Activated CD4-positive, alpha-beta memory T cell treated with anti-CD3 and anti-CD28 coated beads for 36 hours (primary cell): ENCODE measurements at regions of chr4 and their contacts with region 1.

Region 1: DNA sequence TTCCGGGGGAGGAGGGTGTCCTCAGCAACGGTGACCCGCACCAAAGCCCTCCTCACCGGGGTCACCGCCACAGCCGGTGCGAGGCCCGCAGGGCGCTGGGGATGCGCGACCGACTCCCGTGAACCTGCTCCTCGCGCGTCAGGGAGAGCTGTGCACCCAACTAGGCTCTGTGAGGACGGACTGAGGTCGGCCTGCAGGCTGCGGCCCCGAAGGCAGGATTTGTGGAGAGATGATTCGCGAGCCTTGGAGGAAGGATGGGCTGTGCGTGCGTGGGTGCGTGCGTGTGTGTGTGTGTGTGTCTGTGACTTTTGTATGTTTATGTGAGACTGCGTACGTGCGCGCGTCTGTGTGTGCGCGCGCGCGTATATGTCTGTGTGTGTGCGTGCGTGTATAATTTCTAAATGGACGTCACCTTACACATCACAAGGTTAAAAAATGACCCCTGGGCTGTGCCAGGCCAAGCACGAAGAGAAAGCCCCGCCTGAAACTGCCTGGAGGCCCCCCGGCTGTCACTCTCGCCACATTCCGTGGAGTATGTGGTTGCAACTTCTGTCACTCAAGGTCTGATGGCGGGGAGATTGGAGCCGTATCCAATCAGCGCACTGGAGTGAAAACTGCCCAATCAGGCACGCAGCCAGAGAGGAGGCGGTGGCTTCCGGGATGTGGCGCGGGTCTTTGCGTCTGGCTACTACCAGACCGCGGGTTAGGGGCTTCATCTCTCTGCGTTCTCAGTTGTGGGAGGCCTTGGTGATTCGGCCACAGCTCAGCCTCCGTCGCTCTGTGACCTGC is at the start of gene ZNF141:
- DNase-seq: peak; percentile 96
- H3K4me3 Mint-ChIP-seq: peak within 1 kb of the TSS; percentile 100
- H3K27ac Mint-ChIP-seq: peak within 1 kb of the TSS; percentile 100
- H3K4me1 Mint-ChIP-seq: peaks cover 11% of the 10 kb centered on the region
- H3K27me3 Mint-ChIP-seq: no peaks in the 10 kb centered on the region
- total RNA-seq, gene ZNF141: 22.4 to 24.2 TPM

Region 2: GRCh38 chr4:116499-116898 is 220.8 kb before region 1 on chr4:
- CTCF ChIA-PET with region 1: no interaction called
- POLR2A ChIA-PET with region 1: no interaction called
- intact Hi-C with region 1: no loop called
- DNase-seq: no peak
- H3K4me3 Mint-ChIP-seq: no peak overlapping the region
- H3K27ac Mint-ChIP-seq: no peak overlapping the region
- H3K4me1 Mint-ChIP-seq: peaks cover 9% of the 10 kb centered on the region
- H3K27me3 Mint-ChIP-seq: peaks cover 4% of the 10 kb centered on the region

Region 3: DNA sequence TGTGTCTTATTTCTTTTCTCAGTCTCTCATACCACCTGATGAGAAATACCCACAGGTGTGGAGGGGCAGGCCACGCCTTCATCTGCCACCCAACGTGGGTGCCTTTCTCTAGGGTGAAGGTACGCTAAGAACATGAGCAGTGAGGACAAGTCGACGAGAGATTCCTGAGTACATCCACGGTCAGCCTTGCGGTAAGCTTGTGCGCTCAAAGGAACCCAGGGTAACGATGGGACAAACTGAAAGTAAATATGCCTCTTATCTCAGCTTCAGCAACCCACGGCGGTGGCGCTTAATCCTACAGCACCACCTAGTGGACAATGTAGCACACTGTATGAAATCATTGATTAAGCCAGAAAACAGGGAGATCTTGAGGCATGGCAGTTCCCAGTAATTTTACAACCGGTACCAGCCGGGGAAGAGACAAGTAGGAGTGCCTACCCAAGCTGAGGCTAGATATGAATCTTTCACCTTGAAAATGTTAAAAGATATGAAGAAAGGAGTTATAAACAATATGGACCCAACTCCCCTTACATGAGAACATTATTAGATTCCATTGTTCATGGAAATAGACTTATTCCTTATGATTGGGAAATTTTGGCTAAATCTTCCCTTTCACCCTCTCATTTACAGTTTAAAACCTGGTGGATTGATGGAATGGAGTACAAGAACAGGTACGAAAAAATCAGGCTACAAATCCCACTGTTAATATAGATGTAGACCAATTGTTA is 95.1 kb before region 1 on chr4:
- CTCF ChIA-PET with region 1: interaction called, 3 read pairs
- POLR2A ChIA-PET with region 1: no interaction called
- intact Hi-C with region 1: loop called (anchors 10 kb)
- DNase-seq: peak; percentile 81
- H3K4me3 Mint-ChIP-seq: peak overlapping the region; percentile 84
- H3K27ac Mint-ChIP-seq: peak overlapping the region; percentile 82
- H3K4me1 Mint-ChIP-seq: peaks cover 7% of the 10 kb centered on the region
- H3K27me3 Mint-ChIP-seq: no peaks in the 10 kb centered on the region

Region 4: DNA sequence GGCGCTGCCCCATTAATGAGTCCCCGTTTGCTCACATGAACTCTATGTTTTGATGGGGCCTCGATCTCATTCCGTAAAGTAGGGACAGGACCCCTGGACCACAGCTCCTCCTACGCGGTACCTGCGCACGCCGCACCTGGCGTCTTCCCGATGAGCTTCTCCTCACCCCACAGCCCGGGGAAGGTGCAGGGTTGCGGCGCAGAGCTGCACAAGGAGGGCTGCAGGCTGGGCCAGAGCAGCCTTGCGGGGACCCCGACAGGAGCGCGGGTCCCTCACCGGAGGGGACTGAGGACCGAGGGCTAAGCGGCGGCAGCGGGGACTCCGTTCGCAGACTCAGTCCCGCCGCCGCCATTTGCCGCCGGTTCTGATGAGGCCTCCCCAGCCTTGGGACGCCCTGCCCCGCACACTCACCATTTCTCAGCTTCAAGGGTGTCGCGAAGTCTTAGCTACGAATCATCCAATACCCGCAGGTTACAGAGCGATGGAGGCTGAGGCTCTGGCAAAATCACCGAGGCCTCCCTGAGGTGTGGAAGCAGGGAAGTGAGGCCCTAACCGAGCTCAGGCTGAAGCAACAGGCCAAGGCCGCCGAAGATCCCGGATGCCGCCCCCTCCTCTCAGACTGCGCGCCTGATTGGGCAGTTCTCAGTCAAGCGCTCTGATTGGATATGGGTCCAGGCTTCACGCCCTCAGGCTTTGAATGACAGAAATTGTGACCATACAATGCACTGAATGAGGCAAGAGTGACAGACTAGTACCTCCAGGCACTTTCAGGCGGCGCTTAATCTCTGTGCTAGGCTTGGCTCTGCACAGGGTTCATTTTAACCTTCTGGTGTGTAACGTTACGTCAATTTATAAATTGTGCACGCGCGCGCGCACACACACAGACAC is 136.5 kb after region 1 on chr4:
- CTCF ChIA-PET with region 1: no interaction called
- POLR2A ChIA-PET with region 1: interaction called, 6 read pairs
- intact Hi-C with region 1: loop called (anchors 1 kb)
- DNase-seq: peak; percentile 96
- H3K4me3 Mint-ChIP-seq: peak overlapping the region; percentile 99
- H3K27ac Mint-ChIP-seq: peak overlapping the region; percentile 100
- H3K4me1 Mint-ChIP-seq: peaks cover 32% of the 10 kb centered on the region
- H3K27me3 Mint-ChIP-seq: no peaks in the 10 kb centered on the region

Region 5: GRCh38 chr4:498328-498904 is 161.1 kb after region 1 on chr4:
- CTCF ChIA-PET with region 1: interaction called, 3 read pairs
- POLR2A ChIA-PET with region 1: no interaction called
- intact Hi-C with region 1: loop called (anchors 1 kb)
- DNase-seq: no peak
- H3K4me3 Mint-ChIP-seq: peak overlapping the region; percentile 95
- H3K27ac Mint-ChIP-seq: peak overlapping the region; percentile 91
- H3K4me1 Mint-ChIP-seq: peaks cover 41% of the 10 kb centered on the region
- H3K27me3 Mint-ChIP-seq: no peaks in the 10 kb centered on the region

Region 6: GRCh38 chr4:650951-651883 is 313.9 kb after region 1 on chr4:
- CTCF ChIA-PET with region 1: no interaction called
- POLR2A ChIA-PET with region 1: no interaction called
- intact Hi-C with region 1: no loop called
- DNase-seq: no peak
- H3K4me3 Mint-ChIP-seq: no peak overlapping the region
- H3K27ac Mint-ChIP-seq: no peak overlapping the region
- H3K4me1 Mint-ChIP-seq: peaks cover 4% of the 10 kb centered on the region
- H3K27me3 Mint-ChIP-seq: peaks cover 11% of the 10 kb centered on the region